Uterus (tissue), 4 donors: ENCODE measurements at regions of chr3 and their contacts with region 1.

Region 1: DNA sequence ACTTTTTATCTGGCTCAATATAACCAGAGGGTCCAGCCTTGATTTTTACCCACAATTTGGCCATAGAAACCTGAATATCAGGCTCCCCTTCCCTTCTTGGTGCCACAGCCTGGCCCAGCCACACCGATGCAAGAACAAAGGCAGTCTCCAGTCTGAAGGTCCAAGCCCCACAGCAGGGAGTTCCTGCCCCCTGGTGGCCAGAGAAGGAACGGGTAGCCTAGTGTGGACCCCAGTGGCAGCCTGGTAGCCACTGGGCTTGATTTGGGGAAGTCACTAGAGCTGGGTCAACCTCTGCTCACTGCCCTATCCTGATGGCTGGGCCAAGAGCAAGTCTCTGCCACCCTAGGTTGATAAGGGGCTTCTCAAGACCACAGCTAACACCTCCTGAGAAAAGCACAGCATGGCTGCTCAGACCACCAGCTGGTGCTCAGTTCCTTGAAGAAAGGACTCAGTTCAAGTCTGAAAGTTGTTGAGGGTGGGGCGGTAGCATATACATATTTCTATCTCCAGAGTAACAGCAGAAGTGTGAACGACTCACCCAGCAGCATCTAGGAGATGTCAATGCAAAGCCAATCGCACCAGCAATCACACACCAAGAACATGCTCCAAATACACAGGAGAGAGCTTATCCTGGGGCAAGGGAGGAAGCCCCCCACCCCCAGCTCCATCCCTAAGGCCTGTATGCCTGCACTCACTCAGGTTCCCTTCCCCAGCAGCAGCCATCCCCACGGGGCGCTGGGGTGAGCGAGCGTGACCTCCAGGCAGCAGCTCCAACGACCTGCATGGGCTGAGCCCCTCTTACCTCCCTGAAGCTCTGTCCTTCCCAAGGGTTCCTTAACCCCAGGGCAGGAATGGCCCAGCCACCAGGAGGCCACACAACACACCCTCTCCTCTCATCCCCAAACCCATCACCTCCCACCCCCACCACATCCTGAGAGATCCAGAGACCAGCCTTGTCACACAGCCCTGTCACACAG is 7.6 kb downstream of the PFKFB4 start:
- DNase-seq: peak; percentile 84 to 85
- H3K4me3 ChIP-seq: no peak overlapping the region
- H3K27ac ChIP-seq: no peak overlapping the region
- H3K4me1 ChIP-seq: no peaks in the 10 kb centered on the region
- H3K27me3 ChIP-seq: no peaks in the 10 kb centered on the region
- CTCF ChIP-seq: peak; percentile 90 to 97 (median 93)
- POLR2A ChIP-seq: no peak

Region 2: DNA sequence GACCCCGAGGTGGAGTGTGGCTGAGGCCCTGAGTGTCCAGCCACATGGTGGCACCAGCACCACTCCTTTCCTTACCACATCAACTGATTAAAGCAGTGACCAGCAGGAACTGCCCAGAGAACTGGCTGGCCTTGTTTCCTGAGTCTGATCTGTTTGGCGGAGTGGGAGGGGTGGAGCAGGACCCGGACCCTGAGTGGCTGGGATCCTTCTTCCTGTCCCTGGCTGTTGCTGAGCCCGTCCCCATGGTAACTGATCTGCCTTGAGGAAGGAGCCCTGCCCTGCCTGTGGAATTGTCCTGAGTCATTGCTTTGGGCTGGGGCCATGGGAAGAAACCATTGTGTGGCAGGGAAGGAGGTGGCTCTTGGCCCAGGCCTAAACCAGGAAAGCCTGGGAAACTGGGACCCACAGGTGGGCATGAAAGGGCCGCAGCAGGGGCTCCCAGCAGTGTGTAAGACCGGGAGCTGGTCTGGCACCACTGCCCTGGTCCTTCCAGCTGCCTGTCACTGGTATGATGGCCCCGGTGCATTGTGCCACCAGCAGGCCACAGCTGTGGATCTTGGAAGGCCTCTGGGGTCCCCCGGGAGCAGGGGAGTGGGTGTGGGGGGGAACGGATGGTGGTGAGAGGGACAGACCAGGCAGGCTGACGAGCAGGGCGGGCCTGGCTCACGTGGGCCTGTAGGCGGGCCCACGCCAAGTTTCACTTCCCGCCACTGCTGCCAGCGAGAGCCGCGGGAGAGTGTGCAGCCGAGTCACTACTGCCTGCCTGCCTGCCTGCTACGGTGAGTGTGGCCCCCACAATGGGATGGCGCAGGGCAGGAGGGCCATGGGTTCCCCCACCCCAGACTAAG is 83.3 kb before region 1 on chr3:
- intact Hi-C with region 1: loop called (anchors 5 kb)
- DNase-seq: peak; percentile 95 to 99
- H3K4me3 ChIP-seq: peak overlapping the region; percentile 38 to 42
- H3K27ac ChIP-seq: peak overlapping the region; percentile 99 to 100
- H3K4me1 ChIP-seq: peaks cover 10 to 24% of the 10 kb centered on the region in 2 donors
- H3K27me3 ChIP-seq: no peaks in the 10 kb centered on the region
- CTCF ChIP-seq: peak; percentile 78 to 95 (median 82)
- POLR2A ChIP-seq: peak; percentile 84 to 85